ENCODE measurements at regions of chr2 and their contacts with region 1.

Region 1: GRCh38 chr2:219278655-219279516 is at the start of gene DNAJB2:
- DNase-seq: peak; percentile 93
- ATAC-seq: peak; percentile 92
- H3K4me3 ChIP-seq: peak within 1 kb of the TSS; percentile 59 to 77 (median 73)
- H3K27ac ChIP-seq: peak within 1 kb of the TSS; percentile 62
- H3K4me1 ChIP-seq: peaks cover 37% of the 10 kb centered on the region
- H3K27me3 ChIP-seq: 0 out of 5 replicates have a peak, but pooled peaks cover 0 to 5% of the 10 kb centered on the region in 2 experiments
- CTCF ChIP-seq: no peak; the same call in 1 of the 2 replicates
- EP300 ChIP-seq: no peak; a peak in 1 of 4 replicates
- POLR2A ChIP-seq: peak; percentile 52 to 79; a peak in 3 of 4 replicates
- RAD21 ChIP-seq: no peak
- total RNA-seq, gene DNAJB2: 18.6 and 21.3 TPM in 2 replicates

Region 2: DNA sequence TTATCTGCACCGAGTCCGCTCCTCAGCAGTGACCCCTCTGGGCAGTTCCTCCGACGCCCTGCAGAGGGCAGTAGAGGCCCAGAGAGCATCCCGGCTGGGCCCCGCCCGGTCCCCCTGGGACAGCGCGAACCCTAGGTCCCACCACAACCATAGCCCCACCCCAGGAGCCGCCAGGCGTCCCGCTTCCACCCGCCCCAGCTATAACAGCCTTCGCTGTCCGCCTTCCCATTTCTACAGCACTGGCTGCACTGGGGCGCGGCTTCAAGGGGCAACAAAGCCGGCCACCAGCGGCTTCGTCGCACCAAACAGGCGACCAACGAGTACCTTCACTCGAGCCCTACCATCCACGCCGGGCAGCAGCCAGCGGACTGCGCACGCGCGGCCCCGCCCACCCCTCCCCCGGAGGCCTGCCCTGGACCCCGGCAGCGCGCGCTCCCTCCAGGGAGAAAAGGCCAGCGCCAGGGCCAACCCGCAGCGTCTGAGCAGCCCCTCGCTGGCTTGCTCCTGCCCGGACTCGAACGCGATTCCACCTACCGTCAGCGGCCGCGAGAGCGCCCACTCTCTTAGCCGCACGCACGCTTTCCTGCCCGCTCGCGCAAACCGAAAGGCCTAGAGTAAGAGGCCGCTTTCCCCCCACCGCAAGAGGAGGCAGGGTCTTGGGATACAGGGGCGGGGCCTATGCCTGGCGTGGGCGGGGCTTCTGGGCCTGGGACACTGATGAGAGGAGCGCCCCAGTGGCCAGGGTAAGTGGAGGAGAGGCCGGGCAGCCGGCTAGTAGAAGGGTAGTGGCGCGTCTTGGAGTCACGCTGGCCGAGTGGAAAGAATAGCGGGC is 118.5 kb before region 1 on chr2 and contains the start of gene NHEJ1:
- CTCF ChIA-PET with region 1: interaction called, 4 read pairs
- POLR2A ChIA-PET with region 1: interaction called, 3 read pairs
- in situ Hi-C with region 1: no loop called
- intact Hi-C with region 1: loop called (anchors 1 kb)
- DNase-seq: peak; percentile 90
- ATAC-seq: peak; percentile 91
- H3K4me3 ChIP-seq: peak within 1 kb of the TSS; percentile 76 to 94 (median 86)
- H3K27ac ChIP-seq: peak within 1 kb of the TSS; percentile 93
- H3K4me1 ChIP-seq: peaks cover 18% of the 10 kb centered on the region
- H3K27me3 ChIP-seq: no peaks in the 10 kb centered on the region
- CTCF ChIP-seq: peak; percentile 96
- EP300 ChIP-seq: no peak
- POLR2A ChIP-seq: peak; percentile 68 to 93
- RAD21 ChIP-seq: peak; percentile 97
- total RNA-seq, gene NHEJ1: 30.7 and 42.1 TPM in 2 replicates

Region 3: DNA sequence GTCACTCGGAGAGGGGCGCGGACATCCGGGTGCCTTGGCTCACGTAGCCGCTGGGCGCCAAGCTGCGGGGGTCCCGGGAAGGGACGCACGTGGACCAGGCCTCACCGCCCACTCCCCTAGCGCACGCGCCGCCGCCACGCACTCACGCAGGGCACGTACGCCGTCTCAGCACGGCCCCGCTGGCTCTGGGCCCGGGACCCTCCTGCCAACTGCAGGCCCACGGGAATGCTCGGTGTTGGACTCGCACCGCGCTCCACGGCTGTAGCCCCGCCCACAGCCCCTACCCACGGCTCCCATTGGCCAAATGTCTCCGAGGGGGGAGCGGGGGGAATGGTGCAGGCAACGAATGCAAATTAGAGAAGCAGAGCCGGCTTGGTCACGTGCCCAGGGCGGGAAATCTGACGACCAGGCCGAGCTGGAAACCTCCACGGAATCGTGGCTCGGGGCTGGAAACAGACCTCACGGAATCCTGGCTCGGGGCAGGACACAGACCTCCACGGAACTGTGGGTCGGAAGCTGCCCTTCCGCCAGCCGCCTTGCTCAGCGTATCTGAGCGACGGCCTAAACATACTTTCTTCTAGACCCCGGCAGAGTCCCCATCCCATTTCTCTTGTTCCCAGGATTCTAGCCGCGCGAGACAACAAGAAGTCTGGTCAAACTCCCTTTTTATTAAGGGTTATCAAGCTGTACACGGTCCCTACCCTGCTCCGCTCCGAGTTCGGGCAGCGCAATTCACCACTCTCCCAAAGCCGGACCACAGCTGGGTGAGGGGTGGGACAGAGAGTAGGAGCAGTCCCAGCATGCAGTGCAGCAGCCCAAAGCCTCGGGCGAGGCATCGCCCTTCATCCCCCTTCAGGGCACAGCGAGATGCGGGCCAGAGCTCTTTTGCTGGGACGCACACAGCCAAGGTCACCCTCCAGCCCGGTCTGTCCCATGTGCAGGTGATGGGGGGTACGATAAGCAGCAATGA is 59.9 kb before region 1 on chr2 and contains the start of gene ABCB6:
- CTCF ChIA-PET with region 1: no interaction called
- POLR2A ChIA-PET with region 1: interaction called, 23 read pairs
- in situ Hi-C with region 1: no loop called
- intact Hi-C with region 1: no loop called
- DNase-seq: peak; percentile 93
- ATAC-seq: peak; percentile 79
- H3K4me3 ChIP-seq: peak within 1 kb of the TSS; percentile 80 to 92 (median 85)
- H3K27ac ChIP-seq: peak within 1 kb of the TSS; percentile 92
- H3K4me1 ChIP-seq: peaks cover 43% of the 10 kb centered on the region
- H3K27me3 ChIP-seq: no peaks in the 10 kb centered on the region
- CTCF ChIP-seq: 0 out of 2 replicates have a peak, but pooled peaks have one; percentile 20
- EP300 ChIP-seq: no peak; a peak in 1 of 4 replicates
- POLR2A ChIP-seq: peak in 1 of 2 experiments; percentile 94; a peak in 2 of 4 replicates
- RAD21 ChIP-seq: no peak
- total RNA-seq, gene ABCB6: 51.3 and 137 TPM in 2 replicates

Region 4: DNA sequence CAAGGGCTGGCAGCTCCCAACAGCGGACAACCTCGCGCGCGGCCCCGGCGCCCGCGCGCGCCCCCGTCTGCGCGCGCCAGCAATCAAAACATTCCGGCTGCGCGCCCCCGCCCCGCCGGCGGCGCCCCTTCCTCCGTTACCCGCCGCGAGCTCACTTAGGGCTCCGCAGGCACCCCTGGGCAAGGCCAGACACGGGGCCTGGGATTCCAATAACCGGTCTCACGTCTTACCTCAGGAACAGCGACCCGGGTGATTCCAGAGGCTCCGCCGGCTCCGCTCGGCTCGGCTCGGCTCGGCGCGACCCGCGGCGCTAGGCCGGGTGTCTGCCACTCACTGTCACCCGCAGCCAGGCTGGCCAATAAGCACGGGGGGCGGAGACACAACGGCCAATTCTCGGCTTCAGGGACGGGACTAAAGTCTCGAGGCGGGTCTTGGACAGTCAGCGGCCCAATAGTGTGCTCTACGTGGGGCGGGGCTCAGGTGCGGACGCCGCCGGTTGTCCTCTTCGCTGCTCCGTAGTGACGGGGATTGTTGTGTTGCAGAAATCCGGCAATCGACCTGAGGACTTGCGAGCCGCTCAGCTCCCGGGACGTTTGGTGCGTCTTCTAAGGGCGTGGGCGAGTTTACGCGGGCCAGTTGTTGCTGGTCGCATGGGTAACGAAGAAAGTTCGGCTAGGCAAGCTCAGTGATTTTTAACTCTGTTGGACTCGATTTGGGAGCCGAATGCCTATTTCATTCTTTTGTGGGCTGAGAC is 49.4 kb before region 1 on chr2 and contains the starts of genes ANKZF1 and ATG9A:
- CTCF ChIA-PET with region 1: no interaction called
- POLR2A ChIA-PET with region 1: interaction called, 14 read pairs
- in situ Hi-C with region 1: no loop called
- intact Hi-C with region 1: loop called (anchors 1 kb)
- DNase-seq: peak; percentile 99
- ATAC-seq: peak; percentile 94
- H3K4me3 ChIP-seq: peak within 1 kb of the TSS; percentile 91 to 93 (median 93)
- H3K27ac ChIP-seq: peak within 1 kb of the TSS; percentile 81
- H3K4me1 ChIP-seq: peaks cover 39% of the 10 kb centered on the region
- H3K27me3 ChIP-seq: no peaks in the 10 kb centered on the region; a peak in 1 of 5 replicates
- CTCF ChIP-seq: peak; percentile 9; the same call in 1 of the 2 replicates
- EP300 ChIP-seq: peak; percentile 20 to 21; a peak in 3 of 4 replicates
- POLR2A ChIP-seq: peak; percentile 85 to 92
- RAD21 ChIP-seq: peak; percentile 73
- total RNA-seq, gene ANKZF1: 14.6 and 25.3 TPM in 2 replicates
- total RNA-seq, gene ATG9A: 22.2 and 35.0 TPM in 2 replicates

Region 5: GRCh38 chr2:219253753-219254590 is 24.9 kb before region 1 on chr2 and contains the start of gene TUBA4A:
- CTCF ChIA-PET with region 1: interaction called, 3 read pairs
- POLR2A ChIA-PET with region 1: interaction called, 70 read pairs
- in situ Hi-C with region 1: no loop called
- intact Hi-C with region 1: loop called (anchors 1 kb)
- DNase-seq: peak; percentile 58
- ATAC-seq: peak; percentile 62
- H3K4me3 ChIP-seq: peak within 1 kb of the TSS; percentile 62 to 83 (median 62)
- H3K27ac ChIP-seq: no peak within 1 kb of the TSS
- H3K4me1 ChIP-seq: peaks cover 60% of the 10 kb centered on the region
- H3K27me3 ChIP-seq: peaks cover 2 to 40% of the 10 kb centered on the region in 2 experiments; a peak in 4 of 5 replicates
- CTCF ChIP-seq: peak; percentile 6; the same call in 1 of the 2 replicates
- EP300 ChIP-seq: no peak
- POLR2A ChIP-seq: peak in 1 of 2 experiments; percentile 48; a peak in 1 of 4 replicates
- RAD21 ChIP-seq: no peak
- total RNA-seq, gene TUBA4A: 0.97 and 1.3 TPM in 2 replicates

Region 6: GRCh38 chr2:219294356-219295351 is 15.8 kb after region 1 on chr2:
- CTCF ChIA-PET with region 1: interaction called, 88 read pairs
- POLR2A ChIA-PET with region 1: interaction called, 47 read pairs
- in situ Hi-C with region 1: no loop called
- intact Hi-C with region 1: loop called (anchors 1 kb)
- DNase-seq: peak; percentile 80
- ATAC-seq: peak; percentile 85
- H3K4me3 ChIP-seq: peak overlapping the region; percentile 60 to 81 (median 80)
- H3K27ac ChIP-seq: no peak overlapping the region
- H3K4me1 ChIP-seq: peaks cover 36% of the 10 kb centered on the region
- H3K27me3 ChIP-seq: peaks cover 6 to 83% of the 10 kb centered on the region in 2 experiments; a peak in 4 of 5 replicates
- CTCF ChIP-seq: peak; percentile 93
- EP300 ChIP-seq: peak; percentile 48 to 53; a peak in 1 of 4 replicates
- POLR2A ChIP-seq: peak; percentile 48 to 70; a peak in 3 of 4 replicates
- RAD21 ChIP-seq: peak; percentile 99

Region 7: DNA sequence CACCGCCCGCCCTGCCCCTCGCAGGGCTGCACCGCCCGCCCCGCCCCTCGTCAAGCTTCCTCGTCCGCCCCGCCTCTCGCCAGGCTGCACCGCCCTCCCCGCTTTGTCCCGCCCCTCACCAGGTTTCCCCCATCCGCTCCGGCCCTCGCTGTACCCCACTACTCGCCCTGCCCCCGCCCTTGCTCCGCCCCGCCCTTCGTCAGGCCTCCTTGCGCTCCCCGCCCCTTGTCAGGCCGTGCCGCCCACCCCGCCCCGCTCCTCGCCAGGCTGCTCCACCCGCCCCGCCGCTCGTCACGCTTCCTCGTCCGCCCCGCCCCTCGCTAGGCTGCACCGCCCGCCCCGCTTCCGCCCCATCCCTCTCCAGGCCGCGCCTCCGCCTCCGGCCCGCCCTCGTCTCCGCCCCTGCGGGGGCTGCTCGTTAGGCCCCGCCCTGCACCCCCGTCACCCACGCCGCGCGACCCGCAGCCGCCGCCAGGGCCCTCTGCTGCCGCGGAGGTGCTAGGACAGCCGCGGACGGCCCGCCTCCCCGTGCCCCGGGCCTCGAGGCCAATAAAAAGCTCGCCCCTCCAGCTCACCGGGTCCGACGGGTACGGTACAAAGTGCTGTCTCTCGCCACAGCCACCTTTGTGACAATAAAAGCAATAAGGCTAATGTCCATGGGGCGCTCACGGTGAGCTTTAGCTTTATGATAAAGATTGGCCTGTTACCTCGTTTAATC is 109.4 kb after region 1 on chr2:
- CTCF ChIA-PET with region 1: no interaction called
- POLR2A ChIA-PET with region 1: interaction called, 10 read pairs
- in situ Hi-C with region 1: no loop called
- intact Hi-C with region 1: no loop called
- DNase-seq: peak; percentile 87
- ATAC-seq: peak; percentile 74
- H3K4me3 ChIP-seq: peak overlapping the region; percentile 53 to 70 (median 68)
- H3K27ac ChIP-seq: peak overlapping the region; percentile 68
- H3K4me1 ChIP-seq: peaks cover 30% of the 10 kb centered on the region
- H3K27me3 ChIP-seq: no peaks in the 10 kb centered on the region; a peak in 1 of 5 replicates
- CTCF ChIP-seq: peak; percentile 78
- EP300 ChIP-seq: peak in 1 of 2 experiments; percentile 12; a peak in 1 of 4 replicates
- POLR2A ChIP-seq: peak; percentile 52 to 68; a peak in 3 of 4 replicates
- RAD21 ChIP-seq: peak; percentile 67; the same call in 1 of the 2 replicates

Measured in HepG2 (cell line).